Activated CD8-positive, alpha-beta T cell treated with anti-CD3 and anti-CD28 coated beads, Interleukin-2, amount 10 ng/mL, durations not matched to agents 7 days and 5 days (primary cell): ENCODE measurements at regions of chr9 and their contacts with region 1.

Region 1: GRCh38 chr9:131747356-131747755 is 7.5 kb upstream of the RAPGEF1 start:
- DNase-seq: peak; percentile 61
- ATAC-seq: peak; percentile 50
- H3K4me3 Mint-ChIP-seq: no peak overlapping the region
- H3K27ac Mint-ChIP-seq: peak overlapping the region; percentile 17
- H3K4me1 Mint-ChIP-seq: peaks cover 36% of the 10 kb centered on the region
- H3K27me3 Mint-ChIP-seq: peaks cover 2% of the 10 kb centered on the region

Region 2: DNA sequence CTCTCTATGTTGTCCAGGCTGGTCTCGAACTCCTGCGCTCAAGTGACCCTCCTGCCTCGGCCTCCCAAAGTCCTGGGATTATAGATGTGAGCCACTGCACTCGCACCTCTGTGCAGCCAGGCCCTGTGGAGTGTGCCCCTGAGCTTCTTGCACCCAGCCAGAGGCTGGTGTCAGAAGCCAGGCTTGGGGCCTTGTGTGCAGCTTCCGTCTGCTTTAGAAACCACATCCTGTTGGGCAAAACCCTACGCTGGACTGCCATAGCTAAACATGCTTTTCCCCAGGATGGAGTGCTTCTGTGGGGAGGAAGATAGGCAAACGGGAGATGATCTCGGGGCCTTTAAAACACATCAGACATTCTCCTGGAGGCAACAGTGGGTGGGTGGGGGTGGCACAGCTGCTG is 162.0 kb before region 1 on chr9:
- CTCF ChIA-PET with region 1: interaction called, 54 read pairs
- POLR2A ChIA-PET with region 1: interaction called, 3 read pairs
- DNase-seq: peak; percentile 77
- ATAC-seq: peak; percentile 87
- H3K4me3 Mint-ChIP-seq: peak overlapping the region; percentile 42
- H3K27ac Mint-ChIP-seq: peak overlapping the region; percentile 95
- H3K4me1 Mint-ChIP-seq: peaks cover 59% of the 10 kb centered on the region
- H3K27me3 Mint-ChIP-seq: no peaks in the 10 kb centered on the region

Region 3: GRCh38 chr9:131590908-131591844 is 156.2 kb before region 1 on chr9:
- CTCF ChIA-PET with region 1: interaction called, 54 read pairs
- POLR2A ChIA-PET with region 1: interaction called, 3 read pairs
- DNase-seq: peak; percentile 83
- ATAC-seq: peak; percentile 86
- H3K4me3 Mint-ChIP-seq: peak overlapping the region; percentile 23
- H3K27ac Mint-ChIP-seq: peak overlapping the region; percentile 86
- H3K4me1 Mint-ChIP-seq: peaks cover 45% of the 10 kb centered on the region
- H3K27me3 Mint-ChIP-seq: no peaks in the 10 kb centered on the region

Region 4: GRCh38 chr9:131641618-131642495 is 105.5 kb before region 1 on chr9:
- CTCF ChIA-PET with region 1: interaction called, 12 read pairs
- POLR2A ChIA-PET with region 1: no interaction called
- DNase-seq: no peak
- ATAC-seq: no peak
- H3K4me3 Mint-ChIP-seq: no peak overlapping the region
- H3K27ac Mint-ChIP-seq: no peak overlapping the region
- H3K4me1 Mint-ChIP-seq: peaks cover 28% of the 10 kb centered on the region
- H3K27me3 Mint-ChIP-seq: no peaks in the 10 kb centered on the region